ENCODE measurements at regions of chr18 and their contacts with region 1.

Region 1: DNA sequence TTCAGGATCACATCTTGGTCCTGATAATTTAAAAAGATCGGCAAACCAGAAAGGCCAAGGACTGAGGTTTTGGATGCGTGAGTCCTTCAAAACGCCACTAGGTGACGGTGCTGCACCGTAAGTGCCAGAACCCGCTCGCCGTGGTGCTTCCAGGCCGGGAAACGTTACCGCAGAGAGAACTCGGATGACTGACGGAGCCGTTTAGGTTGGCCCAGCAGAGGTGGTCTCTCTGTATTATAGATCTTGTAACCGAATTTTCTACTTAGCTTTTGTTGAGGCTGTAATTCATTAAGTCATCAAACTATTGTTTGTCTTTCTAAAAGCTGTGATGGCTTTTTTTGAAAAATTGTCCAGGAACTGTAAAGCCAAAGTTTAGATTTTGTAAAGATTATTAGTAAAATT is 39.8 kb upstream of the ADCYAP1 start:
- DNase-seq: no peak

Region 2: DNA sequence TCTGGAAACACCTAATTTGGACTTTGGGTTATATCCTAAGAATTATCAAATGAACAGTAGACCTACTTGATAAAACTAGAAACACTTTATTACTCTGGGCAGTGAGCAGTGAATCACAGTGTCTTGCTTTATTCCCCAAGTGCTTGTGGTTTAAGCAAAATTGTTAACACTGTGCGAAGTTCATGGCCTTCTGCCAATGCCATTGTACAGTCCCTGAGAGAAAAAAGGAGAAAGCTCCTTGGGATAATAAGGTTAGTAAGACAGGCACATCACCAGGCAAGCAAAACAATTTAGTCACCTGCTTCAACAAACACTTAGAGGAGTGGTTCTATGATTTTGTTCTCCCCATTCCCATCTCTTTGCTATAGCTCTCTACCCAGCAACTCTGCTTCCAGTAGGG is 79.6 kb after region 1 on chr18:
- intact Hi-C with region 1: no loop called
- DNase-seq: no peak

Region 3: DNA sequence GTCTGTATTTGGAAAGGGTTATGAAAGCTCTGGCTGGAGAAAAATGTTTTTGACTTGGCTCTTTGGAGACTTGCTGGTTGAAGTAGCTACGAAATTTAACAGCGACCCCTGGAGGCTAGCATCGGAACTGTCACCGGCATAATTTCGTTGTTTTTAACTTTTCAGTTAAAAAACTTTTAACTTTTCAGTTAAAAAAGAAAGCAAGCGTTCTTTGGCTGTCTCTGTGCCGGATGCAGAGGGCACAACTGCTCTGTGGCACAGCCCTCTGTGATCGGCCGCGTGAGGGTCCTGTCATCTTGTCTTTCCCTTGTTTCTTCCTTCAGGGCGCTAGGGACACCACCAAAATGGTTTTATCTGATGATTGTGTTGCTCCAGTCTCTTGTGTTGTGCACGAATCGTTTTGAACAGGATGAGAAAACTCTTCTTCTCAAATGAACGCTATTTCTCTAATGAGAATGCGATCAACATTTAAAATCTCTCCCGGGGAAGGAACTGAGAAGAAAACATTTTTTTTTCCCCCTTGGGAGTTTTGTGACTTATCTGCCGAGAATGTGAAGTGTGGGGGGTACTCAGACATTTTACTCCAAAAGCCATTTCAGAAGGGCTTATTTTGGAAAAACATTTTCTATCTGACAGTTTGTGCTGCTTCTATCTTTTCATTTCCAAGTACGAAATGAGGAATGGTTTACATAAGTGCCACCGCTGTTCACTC is 96.9 kb after region 1 on chr18:
- intact Hi-C with region 1: loop called (anchors 2 kb)
- DNase-seq: no peak

Region 4: GRCh38 chr18:2223849-2224248 is 1359.0 kb after region 1 on chr18:
- intact Hi-C with region 1: loop called (anchors 10 kb)
- DNase-seq: no peak

Region 5: DNA sequence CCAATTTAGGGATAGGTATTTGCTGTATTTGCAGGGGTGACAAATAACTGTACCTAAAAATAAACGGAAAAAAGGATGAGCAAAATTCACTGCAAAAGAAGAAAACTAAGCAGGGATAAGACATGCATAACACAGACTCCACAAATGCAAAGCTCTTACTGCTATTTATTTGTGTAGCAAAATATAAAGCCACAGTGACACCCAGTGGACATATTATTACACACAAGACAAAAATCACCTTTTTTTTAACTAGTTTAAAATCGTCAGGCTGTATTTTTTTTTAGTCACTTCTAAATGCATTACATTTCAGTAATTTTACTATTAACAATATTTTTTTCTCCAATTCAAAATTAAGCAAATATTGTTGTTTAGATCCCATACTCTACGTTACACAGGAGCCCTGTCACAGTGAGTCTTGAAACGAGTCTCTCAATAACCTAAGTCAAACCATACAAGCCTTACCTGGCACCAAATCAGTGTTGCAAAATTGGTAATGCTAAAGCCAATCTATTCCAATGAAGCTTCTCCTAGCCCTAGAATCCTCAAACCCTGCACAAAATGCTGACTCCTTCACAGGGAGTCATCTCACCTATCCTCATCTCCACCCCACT is 1682.7 kb after region 1 on chr18:
- intact Hi-C with region 1: loop called (anchors 10 kb)
- DNase-seq: no peak

Measured in cardiac septum (tissue), 1 donor.